ENCODE measurements at regions of chr17 and their contacts with region 1.

Region 1: DNA sequence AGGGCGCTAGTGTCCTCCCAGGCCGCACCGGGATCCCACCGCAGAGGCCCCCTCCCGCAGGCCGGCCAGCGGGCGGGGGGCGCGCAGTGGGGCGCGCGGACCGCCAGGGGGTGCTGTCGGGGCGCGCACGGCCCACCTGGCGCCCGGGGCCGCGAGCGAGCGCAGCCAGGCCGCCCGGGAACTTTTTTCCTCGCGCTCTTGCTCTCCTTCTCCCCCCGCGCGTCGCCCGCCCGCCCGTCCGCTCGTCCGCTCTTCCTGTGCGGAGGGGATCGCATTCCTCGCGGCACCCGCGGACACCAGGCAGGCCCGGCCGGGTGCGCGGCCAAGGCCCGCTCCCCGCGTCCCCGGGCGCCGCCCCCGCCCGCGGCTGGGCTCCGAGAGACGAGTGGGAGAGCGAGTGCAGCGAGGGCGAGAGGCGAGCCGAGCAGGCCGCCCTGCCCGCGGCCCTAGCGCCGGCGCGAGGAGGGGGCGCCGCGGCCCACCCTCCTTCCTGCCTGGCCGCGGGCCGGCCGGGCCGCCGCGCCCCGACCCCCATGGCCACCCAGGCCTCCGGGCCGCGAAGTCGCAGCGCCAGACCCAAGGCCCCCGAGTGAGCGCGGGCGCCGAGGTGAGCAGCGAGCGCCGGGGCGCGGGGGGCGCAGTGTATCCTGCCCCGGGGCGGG is at the start of gene RAI1:
- DNase-seq: peak; percentile 72
- H3K4me3 ChIP-seq: peak within 1 kb of the TSS; percentile 87
- H3K27ac ChIP-seq: peak within 1 kb of the TSS; percentile 93
- H3K4me1 ChIP-seq: peaks cover 15% of the 10 kb centered on the region
- H3K27me3 ChIP-seq: no peaks in the 10 kb centered on the region
- CTCF ChIP-seq: peak; percentile 22
- total RNA-seq, gene RAI1: 21.8 to 24.5 TPM

Region 2: DNA sequence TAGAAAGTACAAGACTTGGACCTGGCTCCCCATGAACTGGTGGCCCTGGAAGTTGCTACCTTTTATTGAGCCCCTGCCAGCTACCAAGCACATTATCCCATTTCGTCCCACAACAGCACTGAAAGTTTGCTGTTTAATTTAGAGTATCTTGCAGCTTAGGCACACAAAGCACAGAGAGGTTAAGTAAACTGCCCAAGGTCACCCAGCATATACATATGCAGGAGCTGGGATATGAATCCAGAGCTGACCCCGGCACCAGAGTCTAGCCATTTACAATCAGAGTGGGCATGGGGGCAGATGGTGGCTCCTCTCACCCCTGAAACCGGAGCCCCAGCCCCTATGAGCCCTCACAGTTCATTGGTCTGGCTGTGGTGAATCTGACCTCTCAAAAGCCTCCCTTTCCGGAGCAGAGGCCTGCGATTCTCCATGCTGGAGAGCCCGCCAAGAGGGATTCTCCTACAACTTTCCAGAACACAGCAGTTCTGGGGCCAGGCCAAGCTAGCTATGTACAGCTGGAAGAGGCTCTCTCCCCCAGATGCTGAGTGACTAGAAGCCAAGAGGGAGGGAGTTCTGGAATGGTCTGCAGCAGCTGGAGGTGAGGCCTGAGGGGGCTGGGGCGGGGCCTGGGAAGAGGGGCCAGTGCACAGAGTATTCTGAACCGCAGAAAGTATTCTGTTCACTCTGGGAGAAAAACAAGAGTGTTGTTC is 97.1 kb after region 1 on chr17:
- intact Hi-C with region 1: loop called (anchors 5 kb)
- DNase-seq: peak; percentile 60
- H3K4me3 ChIP-seq: no peak overlapping the region
- H3K27ac ChIP-seq: peak overlapping the region; percentile 62
- H3K4me1 ChIP-seq: peaks cover 16% of the 10 kb centered on the region
- H3K27me3 ChIP-seq: peaks cover 5% of the 10 kb centered on the region
- CTCF ChIP-seq: no peak

Region 3: DNA sequence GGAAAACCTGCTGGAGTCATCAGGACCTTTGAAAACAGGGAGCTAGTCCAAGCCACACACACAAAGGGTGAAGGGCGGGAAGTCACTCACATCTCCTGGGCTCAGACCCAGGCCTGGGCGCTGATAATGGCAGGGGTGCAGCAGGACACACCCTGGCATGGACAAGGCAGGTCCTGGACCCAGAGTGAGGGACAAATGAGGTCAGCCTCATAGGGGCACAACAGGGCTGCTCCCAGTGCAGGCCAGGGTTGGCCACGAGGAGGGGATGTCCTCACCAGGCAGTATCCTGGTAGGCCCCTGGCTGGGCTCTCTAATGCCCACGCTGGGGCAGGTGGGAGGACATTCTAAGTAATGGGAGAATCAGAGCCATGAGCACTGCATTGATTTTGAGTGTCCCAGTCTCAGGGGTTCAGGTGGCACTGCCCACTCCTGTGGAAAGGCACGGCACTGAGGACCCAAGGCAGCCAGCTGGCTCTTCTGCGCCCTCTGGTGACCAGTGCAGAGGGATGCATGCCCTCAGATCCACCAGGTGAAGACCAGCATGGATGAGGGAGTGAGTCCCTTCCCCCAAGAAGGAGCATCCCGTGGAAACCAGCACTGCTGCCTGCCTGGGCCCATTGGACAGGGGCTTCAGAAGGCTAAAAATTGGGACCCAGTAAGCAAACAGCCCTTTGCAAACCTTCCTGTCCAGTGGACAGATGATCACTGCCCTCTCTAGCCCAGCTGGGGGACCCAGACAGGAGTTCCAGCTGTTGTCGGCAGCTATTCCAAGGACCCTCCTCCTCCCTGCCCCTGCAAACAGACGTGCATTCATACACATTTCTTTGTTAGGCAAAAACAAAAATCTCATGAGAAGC is 178.8 kb after region 1 on chr17:
- intact Hi-C with region 1: loop called (anchors 5 kb)
- DNase-seq: peak; percentile 75
- H3K4me3 ChIP-seq: no peak overlapping the region
- H3K27ac ChIP-seq: no peak overlapping the region
- H3K4me1 ChIP-seq: no peaks in the 10 kb centered on the region
- H3K27me3 ChIP-seq: no peaks in the 10 kb centered on the region
- CTCF ChIP-seq: peak; percentile 96

Region 4: GRCh38 chr17:18033442-18034099 is 352.3 kb after region 1 on chr17:
- intact Hi-C with region 1: loop called (anchors 5 kb)
- DNase-seq: peak; percentile 67
- H3K4me3 ChIP-seq: no peak overlapping the region
- H3K27ac ChIP-seq: no peak overlapping the region
- H3K4me1 ChIP-seq: peaks cover 10% of the 10 kb centered on the region
- H3K27me3 ChIP-seq: no peaks in the 10 kb centered on the region
- CTCF ChIP-seq: peak; percentile 41